Left lung (tissue), 14 donors: ENCODE measurements at regions of chr19 and their contacts with region 1.

Region 1: GRCh38 chr19:11987405-11988281 is 22.8 kb downstream of the ZNF763 start:
- DNase-seq: peak; percentile 88 to 98 (median 96)
- ATAC-seq: peak; percentile 99
- H3K4me3 ChIP-seq: peak overlapping the region; percentile 79 to 93
- H3K27ac ChIP-seq: peak overlapping the region; percentile 91 to 93
- H3K4me1 ChIP-seq: peaks cover 0 to 23% of the 10 kb centered on the region in 2 donors
- H3K27me3 ChIP-seq: no peaks in the 10 kb centered on the region
- CTCF ChIP-seq: no peak

Region 2: DNA sequence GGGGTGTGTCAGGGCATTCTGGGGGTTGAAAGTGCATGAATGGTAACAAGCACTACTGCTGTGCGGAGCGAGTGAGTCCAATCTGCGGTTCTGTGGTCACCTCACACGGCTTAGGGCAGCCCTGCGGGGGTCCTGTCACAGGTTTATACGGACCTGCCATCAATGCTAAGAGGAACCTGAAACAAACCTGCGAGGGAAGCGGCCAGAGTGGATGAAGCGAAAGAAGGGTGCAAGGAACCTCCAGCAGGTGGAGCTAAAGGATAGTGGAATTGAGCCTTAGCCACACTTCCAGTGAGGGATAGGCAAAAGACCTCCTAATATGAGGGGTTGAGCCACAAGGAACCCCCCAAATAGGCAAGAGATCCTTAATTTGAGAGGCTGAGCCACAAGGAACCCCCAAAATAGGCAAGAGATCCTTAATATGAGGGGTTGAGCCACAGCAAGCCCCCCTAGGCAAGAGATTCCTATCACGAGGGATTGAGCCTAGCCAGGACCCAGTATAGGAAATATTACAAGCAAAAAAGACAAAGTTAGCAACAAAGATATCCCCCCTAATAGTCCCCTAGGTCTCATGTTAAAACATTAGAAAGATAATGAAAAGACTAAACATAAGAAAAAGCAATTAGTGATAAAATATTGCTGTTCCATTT is 106.4 kb before region 1 on chr19:
- intact Hi-C with region 1: loop called in 1 of 2 experiments (anchors 5 kb)
- DNase-seq: peak in 2 of 4 donors; percentile 49 to 70
- ATAC-seq: peak; percentile 95
- H3K4me3 ChIP-seq: no peak overlapping the region
- H3K27ac ChIP-seq: no peak overlapping the region
- H3K4me1 ChIP-seq: peaks cover 0 to 4% of the 10 kb centered on the region in 2 donors
- H3K27me3 ChIP-seq: no peaks in the 10 kb centered on the region
- CTCF ChIP-seq: peak; percentile 64 to 76

Region 3: DNA sequence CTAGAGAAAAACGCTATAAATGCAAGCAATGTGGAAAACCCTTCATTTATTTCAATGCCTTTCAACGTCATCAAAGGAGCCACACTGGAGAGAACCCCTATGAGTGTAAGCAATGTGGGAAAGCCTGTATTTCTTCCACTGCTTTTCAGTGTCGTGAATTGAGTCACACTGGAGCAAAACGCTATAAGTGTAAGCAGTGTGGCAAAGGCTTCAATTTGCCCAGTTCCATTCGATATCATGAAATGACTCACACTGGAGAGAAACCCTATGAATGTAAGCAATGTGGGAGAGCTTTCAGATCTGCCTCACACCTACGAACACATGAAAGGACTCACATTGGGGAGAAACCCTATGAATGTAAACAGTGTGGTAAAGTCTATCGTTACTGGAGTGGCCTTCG is 125.1 kb after region 1 on chr19:
- intact Hi-C with region 1: no loop called
- DNase-seq: no peak
- ATAC-seq: no peak
- H3K4me3 ChIP-seq: no peak overlapping the region
- H3K27ac ChIP-seq: no peak overlapping the region
- H3K4me1 ChIP-seq: no peaks in the 10 kb centered on the region
- H3K27me3 ChIP-seq: no peaks in the 10 kb centered on the region
- CTCF ChIP-seq: no peak